ENCODE measurements at regions of chr6 and their contacts with region 1.

Region 1: GRCh38 chr6:142207265-142207877 is 60.3 kb downstream of the VTA1 start:
- DNase-seq: no peak
- H3K4me3 ChIP-seq: no peak overlapping the region
- H3K27me3 ChIP-seq: no peaks in the 10 kb centered on the region
- CTCF ChIP-seq: peak; percentile 84

Region 2: GRCh38 chr6:142146828-142147662 is 60.3 kb before region 1 on chr6 and contains the starts of genes NMBR and VTA1:
- CTCF ChIA-PET with region 1: interaction called, 18 read pairs
- POLR2A ChIA-PET with region 1: no interaction called
- DNase-seq: peak; percentile 96
- H3K4me3 ChIP-seq: peak within 1 kb of the TSS; percentile 95
- H3K27me3 ChIP-seq: no peaks in the 10 kb centered on the region
- CTCF ChIP-seq: peak; percentile 88
- polyA plus RNA-seq, gene NMBR: 0.07 TPM in 1 of 2 replicates, not detected in the other
- polyA plus RNA-seq, gene VTA1: 66.7 and 115 TPM in 2 replicates

Region 3: DNA sequence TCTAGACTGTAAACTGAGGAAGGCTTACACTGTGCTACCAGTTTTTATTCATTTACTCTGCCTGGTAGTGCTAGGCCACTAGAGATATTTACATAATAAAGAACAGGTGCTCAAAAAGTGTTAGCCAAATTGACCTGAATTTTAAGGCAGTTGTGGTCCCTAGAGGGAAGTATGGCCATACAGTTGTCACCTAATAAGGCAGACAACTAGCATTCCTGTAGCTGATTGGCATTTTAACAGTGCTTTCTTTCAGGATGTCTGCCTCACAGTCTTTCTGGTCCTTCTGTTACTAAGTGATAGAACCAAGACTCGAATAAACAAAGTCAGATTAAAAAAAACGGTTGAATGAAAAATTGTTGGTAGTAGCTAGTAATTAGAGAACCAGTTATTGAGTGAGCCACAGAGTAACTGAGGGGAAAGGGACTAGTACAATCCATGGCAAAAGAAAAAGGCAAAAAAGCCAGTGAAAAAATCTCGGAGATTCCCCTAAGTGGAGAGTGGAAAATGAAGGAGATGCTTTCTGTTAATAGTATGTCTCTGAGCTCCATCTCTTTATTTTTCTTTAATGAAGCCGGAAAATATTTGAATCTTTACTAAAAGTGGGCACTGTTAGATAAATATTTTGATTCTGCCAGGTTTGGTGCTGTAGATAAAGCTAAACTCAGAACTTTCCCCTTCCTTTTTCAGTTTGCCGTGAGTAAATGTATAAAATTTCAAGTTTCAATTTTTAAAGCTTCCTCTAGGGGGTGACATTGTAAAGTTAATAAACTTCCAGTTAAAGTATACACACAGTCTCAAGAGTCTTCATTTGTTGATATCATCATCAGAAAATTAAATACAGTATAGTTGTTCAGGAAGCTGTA is 51.2 kb before region 1 on chr6:
- CTCF ChIA-PET with region 1: interaction called, 13 read pairs
- POLR2A ChIA-PET with region 1: no interaction called
- DNase-seq: no peak
- H3K4me3 ChIP-seq: no peak overlapping the region
- H3K27me3 ChIP-seq: no peaks in the 10 kb centered on the region
- CTCF ChIP-seq: peak; percentile 27

Region 4: GRCh38 chr6:142195862-142196541 is 11.4 kb before region 1 on chr6:
- CTCF ChIA-PET with region 1: interaction called, 28 read pairs
- POLR2A ChIA-PET with region 1: no interaction called
- DNase-seq: no peak
- H3K4me3 ChIP-seq: no peak overlapping the region
- H3K27me3 ChIP-seq: no peaks in the 10 kb centered on the region
- CTCF ChIP-seq: no peak

Region 5: DNA sequence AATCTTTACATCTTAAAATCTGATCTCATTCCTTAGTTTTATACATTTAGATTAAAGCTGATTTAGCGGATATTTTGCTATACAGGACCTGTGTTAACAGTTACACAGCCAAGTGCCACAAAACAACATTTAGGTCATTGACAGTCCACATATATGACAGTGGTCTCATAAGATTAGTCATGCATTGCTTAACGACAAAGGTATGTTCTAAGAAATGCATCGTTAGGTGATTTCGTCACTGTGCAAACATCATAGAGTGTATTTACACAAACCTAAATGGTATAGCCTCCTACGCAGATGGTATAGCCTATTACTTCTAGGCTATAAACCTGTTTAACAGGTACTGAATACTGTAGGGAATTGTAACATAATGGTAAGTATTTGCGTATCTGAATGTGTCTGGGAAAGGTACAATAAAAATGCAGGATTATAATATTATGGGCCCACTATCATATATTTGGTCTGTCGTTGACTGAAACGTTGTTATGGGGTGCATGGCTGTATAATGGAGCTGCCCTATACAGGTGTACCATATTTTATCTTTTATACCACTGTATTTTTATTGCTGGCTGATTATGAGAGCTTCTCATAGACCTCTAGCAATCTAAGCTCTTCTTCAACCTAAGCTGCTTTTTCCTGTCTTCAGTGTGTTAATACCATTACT is 116.1 kb after region 1 on chr6:
- CTCF ChIA-PET with region 1: no interaction called
- POLR2A ChIA-PET with region 1: no interaction called
- DNase-seq: no peak
- H3K4me3 ChIP-seq: no peak overlapping the region
- H3K27me3 ChIP-seq: no peaks in the 10 kb centered on the region
- CTCF ChIP-seq: no peak

Region 6: GRCh38 chr6:142605922-142606485 is 398.6 kb after region 1 on chr6:
- CTCF ChIA-PET with region 1: no interaction called
- POLR2A ChIA-PET with region 1: no interaction called
- DNase-seq: peak; percentile 14
- H3K4me3 ChIP-seq: no peak overlapping the region
- H3K27me3 ChIP-seq: peaks cover 4% of the 10 kb centered on the region
- CTCF ChIP-seq: no peak

Measured in BJ (cell line).